ENCODE measurements at regions of chr2 and their contacts with region 1.

Region 1: GRCh38 chr2:79887747-79888374 is 375.0 kb downstream of the CTNNA2 start:
- DNase-seq: peak; percentile 45
- H3K4me3 Mint-ChIP-seq: no peak overlapping the region
- H3K27ac Mint-ChIP-seq: no peak overlapping the region
- H3K4me1 Mint-ChIP-seq: no peaks in the 10 kb centered on the region
- H3K27me3 Mint-ChIP-seq: peaks cover 9% of the 10 kb centered on the region

Region 2: DNA sequence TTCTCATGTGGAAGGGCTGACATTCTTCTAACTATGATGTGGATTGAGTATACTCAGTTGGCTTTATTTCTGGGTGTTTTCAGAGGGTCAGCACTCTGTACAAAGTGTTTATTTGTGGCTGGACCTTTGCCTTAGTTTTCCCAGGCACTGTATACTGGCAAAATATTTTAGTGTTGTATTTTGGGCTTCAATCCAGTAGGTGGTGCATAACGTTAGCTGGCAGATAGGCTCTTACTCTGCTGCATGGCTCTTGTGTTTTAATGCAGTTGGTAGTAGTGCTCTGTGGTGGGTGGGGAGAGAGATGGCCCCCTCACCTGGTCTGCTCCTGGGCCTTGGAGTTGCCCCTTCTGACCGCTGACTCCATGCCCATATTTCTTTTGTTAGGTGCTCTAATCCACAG is 652.7 kb before region 1 on chr2:
- CTCF ChIA-PET with region 1: no interaction called
- intact Hi-C with region 1: loop called (anchors 10 kb)
- DNase-seq: no peak
- H3K4me3 Mint-ChIP-seq: no peak overlapping the region
- H3K27ac Mint-ChIP-seq: no peak overlapping the region
- H3K4me1 Mint-ChIP-seq: no peaks in the 10 kb centered on the region
- H3K27me3 Mint-ChIP-seq: peaks cover 2% of the 10 kb centered on the region

Region 3: DNA sequence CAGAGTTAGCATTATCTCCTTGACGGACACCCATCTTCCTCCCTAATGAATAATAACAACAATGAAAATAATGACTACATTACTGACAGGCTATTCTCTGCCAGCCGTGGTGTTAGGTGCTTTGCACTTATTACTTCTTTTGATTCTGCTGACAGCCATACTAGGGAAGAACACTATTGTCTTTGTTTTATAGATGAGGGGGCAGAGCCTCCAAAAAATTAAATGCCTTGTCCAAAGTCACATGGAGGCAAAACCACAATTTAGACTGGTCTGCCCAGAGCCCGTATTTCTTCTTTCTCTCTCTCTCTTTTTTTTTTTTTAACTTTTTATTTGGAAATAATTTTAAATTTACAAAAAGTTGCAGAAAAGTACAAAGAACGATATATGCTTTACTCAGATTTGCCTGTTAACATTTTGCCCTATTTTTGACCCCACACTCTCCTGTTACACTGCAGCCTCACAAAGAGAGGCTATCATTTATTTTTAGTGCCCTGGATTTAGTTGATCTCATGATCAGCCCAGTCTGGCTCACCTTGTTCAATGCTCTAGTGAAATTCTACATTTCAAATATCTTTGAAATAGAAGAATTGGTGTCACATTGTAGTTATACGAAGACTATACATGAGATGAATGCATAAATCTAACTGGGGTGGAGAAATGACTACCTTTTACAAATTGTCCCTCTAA is 47.3 kb after region 1 on chr2:
- CTCF ChIA-PET with region 1: no interaction called
- intact Hi-C with region 1: no loop called
- DNase-seq: no peak
- H3K4me3 Mint-ChIP-seq: no peak overlapping the region
- H3K27ac Mint-ChIP-seq: no peak overlapping the region
- H3K4me1 Mint-ChIP-seq: peaks cover 3% of the 10 kb centered on the region
- H3K27me3 Mint-ChIP-seq: peaks cover 16% of the 10 kb centered on the region

Measured in activated naive CD4-positive, alpha-beta T cell treated with anti-CD3 and anti-CD28 coated beads for 36 hours (primary cell).